Endothelial cell of umbilical vein (primary cell): ENCODE measurements at regions of chr4 and their contacts with region 1.

Region 1: GRCh38 chr4:39527273-39528060 is at the start of gene UGDH:
- DNase-seq: peak; percentile 98
- H3K4me3 ChIP-seq: peak within 1 kb of the TSS; percentile 50 to 92 (median 60)
- H3K27ac ChIP-seq: peak within 1 kb of the TSS; percentile 90
- H3K4me1 ChIP-seq: peaks cover 12% of the 10 kb centered on the region
- H3K27me3 ChIP-seq: no peaks in the 10 kb centered on the region
- CTCF ChIP-seq: no peak
- POLR2A ChIP-seq: peak; percentile 97
- total RNA-seq, gene UGDH: 62.1 and 69.7 TPM in 2 replicates

Region 2: DNA sequence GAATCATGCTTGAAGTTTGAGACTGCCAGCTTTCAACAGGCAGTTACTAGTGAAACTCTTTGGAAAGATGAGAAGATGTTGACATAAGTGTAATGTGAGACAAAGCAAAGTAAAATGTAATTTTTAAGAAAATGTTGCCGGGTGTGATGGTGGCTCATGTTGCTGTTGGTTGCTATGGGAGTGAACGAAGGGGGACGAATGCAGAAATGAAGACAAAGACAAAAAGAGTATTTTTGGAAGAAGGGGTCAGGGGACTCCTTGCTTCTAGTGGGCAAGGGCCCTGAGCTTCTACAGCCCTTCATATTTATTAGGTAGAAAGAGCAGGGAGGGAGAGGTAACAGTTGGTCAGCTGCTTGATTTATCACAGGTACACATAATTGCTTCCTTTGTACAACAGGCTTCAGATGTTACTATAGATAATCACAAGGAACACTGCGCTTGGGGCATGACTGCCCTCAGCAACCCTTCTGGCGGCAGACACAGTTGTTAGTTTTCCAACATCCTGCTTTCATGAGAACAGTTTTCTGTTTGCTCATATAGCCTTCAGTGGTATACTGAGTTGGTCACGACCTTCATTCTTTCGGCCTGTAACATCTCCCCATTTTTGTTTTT is 11.7 kb after region 1 on chr4:
- CTCF ChIA-PET with region 1: no interaction called
- POLR2A ChIA-PET with region 1: interaction called, 6 read pairs
- dilution Hi-C with region 1: no loop called
- intact Hi-C with region 1: loop called (anchors 1 kb)
- DNase-seq: no peak
- H3K4me3 ChIP-seq: no peak overlapping the region
- H3K27ac ChIP-seq: no peak overlapping the region
- H3K4me1 ChIP-seq: no peaks in the 10 kb centered on the region
- H3K27me3 ChIP-seq: no peaks in the 10 kb centered on the region
- CTCF ChIP-seq: no peak
- POLR2A ChIP-seq: no peak

Region 3: GRCh38 chr4:39621582-39621981 is 94.1 kb after region 1 on chr4:
- CTCF ChIA-PET with region 1: no interaction called
- POLR2A ChIA-PET with region 1: no interaction called
- dilution Hi-C with region 1: no loop called
- intact Hi-C with region 1: loop called (anchors 5 kb)
- DNase-seq: peak; percentile 72
- H3K4me3 ChIP-seq: no peak overlapping the region
- H3K27ac ChIP-seq: peak overlapping the region; percentile 72
- H3K4me1 ChIP-seq: peaks cover 37% of the 10 kb centered on the region
- H3K27me3 ChIP-seq: no peaks in the 10 kb centered on the region
- CTCF ChIP-seq: no peak
- POLR2A ChIP-seq: no peak

Region 4: GRCh38 chr4:39697740-39698423 is 170.4 kb after region 1 on chr4 and contains the start of gene UBE2K:
- CTCF ChIA-PET with region 1: interaction called, 3 read pairs
- POLR2A ChIA-PET with region 1: interaction called, 3 read pairs
- dilution Hi-C with region 1: no loop called
- intact Hi-C with region 1: loop called (anchors 2 kb)
- DNase-seq: peak; percentile 81
- H3K4me3 ChIP-seq: peak within 1 kb of the TSS; percentile 39 to 97 (median 90)
- H3K27ac ChIP-seq: peak within 1 kb of the TSS; percentile 80
- H3K4me1 ChIP-seq: peaks cover 21% of the 10 kb centered on the region
- H3K27me3 ChIP-seq: no peaks in the 10 kb centered on the region
- CTCF ChIP-seq: no peak
- POLR2A ChIP-seq: peak; percentile 84
- total RNA-seq, gene UBE2K: 90.3 and 97.8 TPM in 2 replicates

Region 5: GRCh38 chr4:39977489-39978377 is 450.3 kb after region 1 on chr4 and contains the start of gene PDS5A:
- CTCF ChIA-PET with region 1: no interaction called
- POLR2A ChIA-PET with region 1: no interaction called
- dilution Hi-C with region 1: no loop called
- intact Hi-C with region 1: loop called (anchors 1 kb)
- DNase-seq: peak; percentile 88
- H3K4me3 ChIP-seq: peak within 1 kb of the TSS; percentile 62 to 83 (median 67)
- H3K27ac ChIP-seq: peak within 1 kb of the TSS; percentile 74
- H3K4me1 ChIP-seq: peaks cover 15% of the 10 kb centered on the region
- H3K27me3 ChIP-seq: no peaks in the 10 kb centered on the region
- CTCF ChIP-seq: peak; percentile 77 to 95
- POLR2A ChIP-seq: peak; percentile 78
- total RNA-seq, gene PDS5A: 77.8 and 80.8 TPM in 2 replicates